Heart left ventricle (tissue), 16 donors: ENCODE measurements at regions of chr4 and their contacts with region 1.

Region 1: DNA sequence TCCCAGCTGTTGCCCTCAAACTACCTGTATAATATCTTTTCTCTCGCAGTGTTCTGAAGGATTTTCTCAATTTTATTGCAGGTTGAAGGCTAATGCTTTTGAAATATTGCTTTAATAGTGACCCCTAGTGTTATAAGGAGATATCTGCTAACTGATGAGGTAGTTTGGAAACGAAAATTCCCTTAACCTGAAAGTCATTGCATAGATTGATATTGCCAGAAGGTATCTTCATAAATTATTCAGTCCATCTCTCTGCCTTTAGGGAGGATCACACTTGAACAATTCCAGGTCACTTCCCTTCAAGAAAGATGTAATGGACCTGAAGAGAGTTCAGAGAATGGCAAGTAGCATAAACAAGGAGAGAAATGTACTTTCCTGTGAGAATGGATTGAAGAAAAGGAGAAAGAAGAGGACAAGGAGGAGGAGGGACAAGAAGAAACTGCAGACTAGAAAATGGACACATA is 44.1 kb downstream of the TIGD4 start:
- DNase-seq: no peak
- ATAC-seq: peak in 2 of 4 donors; percentile 41 to 44
- H3K4me3 ChIP-seq: no peak overlapping the region
- H3K27ac ChIP-seq: no peak overlapping the region
- H3K4me1 ChIP-seq: peaks cover 0 to 5% (median 0%) of the 10 kb centered on the region in 12 donors
- H3K27me3 ChIP-seq: no peaks in the 10 kb centered on the region
- CTCF ChIP-seq: peak; percentile 42 to 71 (median 62)
- POLR2A ChIP-seq: no peak

Region 2: DNA sequence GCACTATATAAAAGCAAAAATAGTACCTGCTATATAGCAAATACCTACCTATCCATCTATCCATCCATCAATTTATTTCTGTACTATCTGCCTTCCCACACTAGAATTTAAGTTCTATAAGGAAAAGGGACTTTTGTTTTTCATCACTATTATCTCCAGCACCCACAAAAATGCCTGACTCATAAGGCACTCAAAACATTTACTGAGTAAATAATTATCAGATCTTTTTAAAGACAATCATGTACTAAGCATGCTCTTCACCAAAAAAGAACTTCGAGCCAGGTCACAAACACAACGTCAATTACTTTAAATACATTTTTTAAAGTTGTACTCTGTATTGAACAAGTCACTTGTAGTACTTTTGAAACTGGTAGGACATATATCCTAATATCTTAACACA is 319.4 kb before region 1 on chr4:
- intact Hi-C with region 1: loop called in 1 of 10 experiments (anchors 10 kb)
- DNase-seq: no peak
- ATAC-seq: no peak
- H3K4me3 ChIP-seq: no peak overlapping the region
- H3K27ac ChIP-seq: no peak overlapping the region
- H3K4me1 ChIP-seq: no peaks in the 10 kb centered on the region
- H3K27me3 ChIP-seq: no peaks in the 10 kb centered on the region
- CTCF ChIP-seq: no peak
- POLR2A ChIP-seq: no peak

Region 3: DNA sequence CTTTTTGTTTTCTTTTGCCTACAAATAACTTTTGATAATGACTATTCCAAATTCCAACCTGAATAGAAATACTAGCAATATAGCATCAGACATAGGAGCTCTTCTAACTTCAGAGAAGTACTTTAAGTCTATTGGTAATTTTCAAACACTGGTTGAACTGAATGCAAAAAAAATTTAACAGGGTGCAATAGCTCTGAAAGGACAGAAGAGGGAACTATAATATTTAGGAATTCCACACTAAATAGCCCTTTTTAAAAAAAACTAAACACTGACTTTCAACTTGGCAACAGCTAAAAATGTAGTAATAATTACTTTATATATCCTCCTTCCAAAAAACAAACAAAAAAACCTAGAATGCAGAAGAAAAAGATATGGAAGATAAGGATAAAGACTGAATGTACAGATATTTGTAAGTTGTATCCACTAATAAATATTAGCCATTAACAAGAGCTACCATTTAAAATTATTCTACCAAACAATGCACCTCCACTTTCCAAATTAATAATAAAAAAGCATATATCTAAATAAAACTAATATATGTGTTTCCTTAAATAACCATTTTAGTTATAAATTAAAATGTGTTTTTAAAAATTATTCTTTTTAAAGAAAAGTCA is 280.9 kb before region 1 on chr4:
- intact Hi-C with region 1: loop called in 2 of 10 experiments (anchors 5 kb)
- DNase-seq: no peak
- ATAC-seq: no peak
- H3K4me3 ChIP-seq: no peak overlapping the region
- H3K27ac ChIP-seq: no peak overlapping the region
- H3K4me1 ChIP-seq: peaks cover 0 to 15% (median 0%) of the 10 kb centered on the region in 12 donors
- H3K27me3 ChIP-seq: no peaks in the 10 kb centered on the region
- CTCF ChIP-seq: peak; percentile 27 to 70 (median 54)
- POLR2A ChIP-seq: no peak

Region 4: GRCh38 chr4:152500800-152501434 is 234.5 kb before region 1 on chr4:
- intact Hi-C with region 1: loop called (anchors 2 to 5 kb)
- DNase-seq: peak in 2 of 5 donors; percentile 55 to 56
- ATAC-seq: peak in 3 of 4 donors; percentile 63 to 86 (median 72)
- H3K4me3 ChIP-seq: no peak overlapping the region
- H3K27ac ChIP-seq: no peak overlapping the region
- H3K4me1 ChIP-seq: peaks cover 0 to 7% (median 0%) of the 10 kb centered on the region in 12 donors
- H3K27me3 ChIP-seq: no peaks in the 10 kb centered on the region
- CTCF ChIP-seq: peak; percentile 66 to 92 (median 86)
- POLR2A ChIP-seq: no peak

Region 5: GRCh38 chr4:152640058-152640833 is 95.2 kb before region 1 on chr4:
- intact Hi-C with region 1: loop called in 6 of 10 experiments (anchors 5 to 10 kb)
- DNase-seq: no peak
- ATAC-seq: peak in 1 of 4 donors; percentile 69
- H3K4me3 ChIP-seq: no peak overlapping the region
- H3K27ac ChIP-seq: no peak overlapping the region
- H3K4me1 ChIP-seq: peaks cover 0 to 40% (median 8%) of the 10 kb centered on the region in 12 donors
- H3K27me3 ChIP-seq: no peaks in the 10 kb centered on the region
- CTCF ChIP-seq: peak; percentile 50 to 75 (median 63)
- POLR2A ChIP-seq: no peak

Region 6: GRCh38 chr4:152646221-152646620 is 89.2 kb before region 1 on chr4:
- intact Hi-C with region 1: loop called in 6 of 10 experiments (anchors 5 to 10 kb)
- DNase-seq: no peak
- ATAC-seq: no peak
- H3K4me3 ChIP-seq: no peak overlapping the region
- H3K27ac ChIP-seq: no peak overlapping the region
- H3K4me1 ChIP-seq: peaks cover 0 to 25% (median 6%) of the 10 kb centered on the region in 12 donors
- H3K27me3 ChIP-seq: no peaks in the 10 kb centered on the region
- CTCF ChIP-seq: no peak
- POLR2A ChIP-seq: no peak